Vagina (tissue), 2 donors: ENCODE measurements at regions of chr17 and their contacts with region 1.

Region 1: DNA sequence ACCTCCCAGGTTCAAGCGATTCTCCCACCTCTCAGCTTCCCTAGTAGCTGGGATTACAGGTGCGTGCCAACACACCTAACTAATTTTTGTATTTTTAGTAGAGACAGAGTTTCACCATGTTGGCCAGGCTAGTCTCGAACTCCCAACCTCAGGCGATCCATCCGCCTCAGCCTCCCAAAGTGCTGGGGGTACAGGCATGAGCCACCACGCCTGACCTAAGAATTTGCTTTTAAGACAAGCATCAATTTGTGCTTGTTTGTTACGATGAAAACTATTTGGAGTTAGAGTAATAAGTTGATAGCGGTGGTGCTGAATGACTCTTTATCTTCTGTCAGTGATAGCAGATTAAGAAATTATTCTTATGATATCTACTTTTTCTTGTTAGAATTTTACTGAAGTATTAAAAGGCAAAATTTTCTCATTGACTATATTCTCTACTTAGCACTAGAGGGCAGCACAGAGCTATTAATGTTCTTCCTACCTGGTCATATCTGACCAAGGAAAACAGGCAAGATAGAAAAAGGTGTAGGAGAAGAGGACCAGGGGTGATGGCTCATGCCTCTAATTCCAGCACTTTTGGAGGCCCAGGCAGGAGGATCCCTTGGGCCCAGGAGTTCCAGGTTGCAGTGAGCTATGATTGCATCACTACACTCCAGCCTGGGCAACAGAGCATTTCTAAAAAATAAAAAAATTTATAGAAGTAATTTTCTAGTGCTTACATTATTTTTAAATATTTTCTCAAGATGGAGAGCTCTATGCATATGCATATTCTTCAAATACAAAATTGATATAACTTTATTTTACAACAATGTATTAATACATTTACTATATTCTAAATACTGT is 24.5 kb downstream of the STXBP4 start:
- DNase-seq: no peak
- H3K4me3 ChIP-seq: no peak overlapping the region
- H3K27ac ChIP-seq: no peak overlapping the region
- H3K4me1 ChIP-seq: no peaks in the 10 kb centered on the region
- H3K27me3 ChIP-seq: no peaks in the 10 kb centered on the region
- CTCF ChIP-seq: peak in 2 of 3 experiments; percentile 47 to 57
- POLR2A ChIP-seq: no peak

Region 2: DNA sequence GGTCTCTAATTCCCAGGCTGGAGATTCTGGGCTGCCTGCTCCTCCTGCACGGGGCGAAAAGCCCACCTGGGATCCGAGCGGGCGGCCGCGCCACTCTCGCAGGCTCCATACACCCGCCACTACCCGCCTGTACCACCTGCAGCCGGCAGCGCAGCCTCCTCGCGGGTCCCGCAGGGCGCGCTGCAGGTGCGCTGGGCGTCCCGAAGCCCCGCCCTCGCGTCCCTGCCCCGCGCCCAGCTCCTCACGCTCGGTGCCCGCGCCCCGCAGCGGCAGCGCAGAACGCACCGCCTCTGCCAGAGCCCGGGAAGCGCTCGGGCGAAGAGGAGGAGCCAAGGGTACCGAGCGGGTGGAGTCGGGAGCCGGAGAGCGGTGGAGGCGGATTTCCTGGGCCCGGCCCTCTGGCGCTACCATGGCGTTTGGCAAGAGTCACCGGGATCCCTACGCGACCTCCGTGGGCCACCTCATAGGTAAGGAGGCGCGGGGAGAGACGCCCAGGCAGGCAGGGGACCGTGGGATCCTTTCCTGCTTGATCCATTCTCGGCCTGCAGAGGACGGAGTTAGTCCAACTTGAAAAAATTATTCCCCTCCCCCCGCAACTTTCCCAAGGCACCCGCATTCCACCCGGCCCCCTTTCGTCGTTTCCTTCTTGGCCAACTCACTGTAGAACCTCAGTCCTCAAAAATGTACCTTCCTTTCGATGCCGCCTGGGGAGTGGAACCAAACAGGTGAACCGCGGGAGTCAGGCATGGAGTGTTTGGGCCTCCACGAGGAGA is 92.4 kb before region 1 on chr17 and contains the start of gene TOM1L1:
- intact Hi-C with region 1: no loop called
- DNase-seq: no peak
- H3K4me3 ChIP-seq: peak within 1 kb of the TSS; percentile 57 to 58
- H3K27ac ChIP-seq: peak within 1 kb of the TSS; percentile 10
- H3K4me1 ChIP-seq: peaks cover 25% of the 10 kb centered on the region
- H3K27me3 ChIP-seq: no peaks in the 10 kb centered on the region
- CTCF ChIP-seq: no peak
- POLR2A ChIP-seq: no peak
- total RNA-seq, gene TOM1L1: 17.7 TPM

Region 3: GRCh38 chr17:55020277-55020676 is 27.3 kb after region 1 on chr17:
- intact Hi-C with region 1: no loop called
- DNase-seq: no peak
- H3K4me3 ChIP-seq: no peak overlapping the region
- H3K27ac ChIP-seq: no peak overlapping the region
- H3K4me1 ChIP-seq: no peaks in the 10 kb centered on the region
- H3K27me3 ChIP-seq: no peaks in the 10 kb centered on the region
- CTCF ChIP-seq: no peak
- POLR2A ChIP-seq: no peak

Region 4: DNA sequence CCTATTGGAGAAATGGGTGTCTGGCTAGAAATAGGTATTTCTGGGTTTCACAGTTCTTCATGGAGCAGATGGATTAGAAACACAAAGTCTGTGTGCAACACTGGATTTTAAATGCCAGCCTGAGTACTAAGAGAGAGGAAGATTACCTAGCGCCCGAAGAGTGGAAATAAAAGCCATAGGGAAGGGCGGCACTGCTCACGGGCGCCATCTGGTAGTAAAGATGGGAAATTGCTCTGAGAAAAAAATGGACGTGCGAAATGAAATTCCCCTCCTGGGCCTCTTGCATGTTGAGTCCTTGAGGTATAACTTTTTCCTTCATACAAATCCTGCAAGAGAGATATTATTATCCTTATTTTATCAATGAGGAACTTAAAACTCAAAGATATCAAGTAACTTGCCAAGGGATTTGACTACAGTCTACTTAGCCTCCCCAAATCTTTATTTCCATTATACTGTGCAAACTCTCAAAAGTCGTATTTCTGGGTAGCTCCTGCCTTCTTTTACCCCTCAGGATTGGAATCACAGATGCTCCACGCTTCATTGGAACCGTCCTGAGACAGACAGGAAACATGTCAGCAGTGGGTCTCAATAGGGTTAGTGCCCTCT is 355.8 kb after region 1 on chr17:
- intact Hi-C with region 1: loop called (anchors 10 kb)
- DNase-seq: no peak
- H3K4me3 ChIP-seq: no peak overlapping the region
- H3K27ac ChIP-seq: no peak overlapping the region
- H3K4me1 ChIP-seq: no peaks in the 10 kb centered on the region
- H3K27me3 ChIP-seq: no peaks in the 10 kb centered on the region
- CTCF ChIP-seq: peak in 2 of 3 experiments; percentile 73 to 82
- POLR2A ChIP-seq: no peak

Region 5: DNA sequence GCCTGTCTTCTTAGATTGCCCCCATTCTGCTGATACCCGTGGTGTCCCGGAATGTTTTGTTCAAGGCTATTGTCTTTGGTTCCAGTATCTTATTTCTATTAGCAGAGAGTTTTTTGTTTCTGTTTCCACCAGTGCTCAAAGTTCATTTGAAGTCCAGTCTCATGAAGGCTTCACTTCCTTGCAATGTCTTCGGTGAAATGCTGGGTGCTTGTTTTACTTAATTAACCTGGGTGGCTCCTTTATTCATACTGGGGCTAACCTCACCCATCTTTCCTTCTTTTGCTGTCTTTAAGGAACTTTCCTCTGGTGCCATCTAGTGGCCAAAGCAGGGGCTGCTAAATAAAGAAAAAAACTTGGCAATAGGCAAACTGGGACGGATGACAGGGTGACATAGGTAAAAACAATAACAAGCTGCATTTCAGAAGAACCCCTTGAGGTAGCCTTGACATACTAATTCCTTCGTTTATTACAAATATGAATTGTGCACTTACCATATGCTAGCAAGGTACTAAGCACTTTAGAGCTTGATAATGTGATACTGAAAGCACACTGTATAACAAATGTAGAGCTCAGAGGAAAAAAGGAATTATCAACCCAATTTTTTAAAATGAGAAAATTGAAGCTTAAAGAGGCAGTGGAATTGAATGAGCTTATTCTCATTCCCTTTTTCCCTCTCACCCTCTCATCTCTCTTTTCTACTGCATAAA is 521.0 kb after region 1 on chr17:
- intact Hi-C with region 1: loop called (anchors 5 kb)
- DNase-seq: no peak
- H3K4me3 ChIP-seq: no peak overlapping the region
- H3K27ac ChIP-seq: no peak overlapping the region
- H3K4me1 ChIP-seq: no peaks in the 10 kb centered on the region
- H3K27me3 ChIP-seq: no peaks in the 10 kb centered on the region
- CTCF ChIP-seq: peak; percentile 72 to 90 (median 79)
- POLR2A ChIP-seq: no peak